Activated CD4-positive, alpha-beta memory T cell treated with anti-CD3 and anti-CD28 coated beads for 36 hours (primary cell): ENCODE measurements at regions of chr2 and their contacts with region 1.

Region 1: GRCh38 chr2:11778923-11779757 is 32.7 kb downstream of the LPIN1 start:
- DNase-seq: peak; percentile 89
- H3K4me3 Mint-ChIP-seq: peak overlapping the region; percentile 53
- H3K27ac Mint-ChIP-seq: peak overlapping the region; percentile 61
- H3K4me1 Mint-ChIP-seq: peaks cover 44% of the 10 kb centered on the region
- H3K27me3 Mint-ChIP-seq: no peaks in the 10 kb centered on the region

Region 2: DNA sequence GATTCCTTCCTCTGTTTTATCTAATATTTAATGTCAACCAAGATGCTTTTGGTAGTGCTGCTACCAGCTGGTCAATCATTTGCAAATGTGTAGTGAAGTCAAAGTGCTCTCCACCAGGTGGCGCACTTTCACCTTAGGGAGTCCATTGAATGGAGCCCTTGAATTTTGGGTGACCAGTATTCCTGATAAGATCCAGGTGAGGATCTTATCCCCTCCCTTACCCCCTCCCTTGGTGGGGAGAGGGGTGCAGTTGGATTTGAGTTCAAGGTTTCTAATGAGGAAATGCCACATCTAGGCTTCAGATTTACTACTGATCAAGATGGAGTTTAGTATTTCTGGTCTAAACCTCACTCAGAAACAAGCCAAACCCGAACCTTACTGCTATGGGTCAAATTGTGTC is 301.1 kb before region 1 on chr2:
- CTCF ChIA-PET with region 1: interaction called, 6 read pairs
- POLR2A ChIA-PET with region 1: no interaction called
- intact Hi-C with region 1: loop called (anchors 1 kb)
- DNase-seq: peak; percentile 86
- H3K4me3 Mint-ChIP-seq: no peak overlapping the region
- H3K27ac Mint-ChIP-seq: no peak overlapping the region
- H3K4me1 Mint-ChIP-seq: peaks cover under 1% of the 10 kb centered on the region
- H3K27me3 Mint-ChIP-seq: peaks cover 21% of the 10 kb centered on the region

Region 3: GRCh38 chr2:11571131-11571530 is 208.0 kb before region 1 on chr2:
- CTCF ChIA-PET with region 1: no interaction called
- POLR2A ChIA-PET with region 1: no interaction called
- intact Hi-C with region 1: no loop called
- DNase-seq: no peak
- H3K4me3 Mint-ChIP-seq: no peak overlapping the region
- H3K27ac Mint-ChIP-seq: no peak overlapping the region
- H3K4me1 Mint-ChIP-seq: no peaks in the 10 kb centered on the region
- H3K27me3 Mint-ChIP-seq: peaks cover 5% of the 10 kb centered on the region

Region 4: DNA sequence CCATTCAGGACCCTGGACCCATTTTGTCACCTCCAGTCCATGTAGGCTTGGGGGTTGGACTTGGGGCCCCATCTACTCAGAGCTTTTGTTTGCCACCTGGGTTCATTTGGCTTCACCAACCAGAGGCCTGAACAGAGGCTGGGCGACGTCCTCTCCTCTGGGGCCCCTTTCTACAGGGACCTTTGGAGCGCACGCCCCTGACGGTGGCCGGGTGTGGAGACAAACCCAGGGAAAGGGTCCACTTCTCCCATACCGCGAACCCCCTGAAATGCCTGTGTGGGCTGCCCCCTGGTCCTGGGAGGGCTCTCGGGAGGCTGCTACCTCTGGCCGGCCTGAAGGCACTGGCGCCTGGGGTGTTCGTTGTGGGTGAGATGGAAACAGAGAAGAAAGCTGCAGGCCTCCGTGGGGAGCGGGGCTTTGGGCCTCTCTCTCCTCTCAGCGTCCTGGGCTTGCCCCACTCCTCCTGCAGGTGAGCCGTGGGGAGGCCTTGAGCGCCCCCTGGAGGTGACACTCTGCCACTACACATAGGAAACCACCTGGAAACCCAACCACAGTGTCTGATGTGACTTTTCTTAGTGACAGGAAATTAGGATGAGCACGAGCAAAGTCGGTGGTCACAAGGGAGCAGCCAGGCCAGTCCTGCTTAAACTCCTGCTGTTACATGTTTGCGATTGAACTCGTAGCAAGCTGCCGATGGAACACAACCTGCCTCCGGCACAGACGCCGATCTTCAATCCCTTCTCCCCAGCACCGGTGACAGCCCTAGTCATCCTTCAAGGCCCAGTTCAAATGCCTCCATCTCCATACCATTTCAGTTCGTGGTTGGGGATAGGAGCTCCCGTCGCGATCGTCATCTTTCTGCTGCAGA is 97.2 kb before region 1 on chr2:
- CTCF ChIA-PET with region 1: interaction called, 364 read pairs
- POLR2A ChIA-PET with region 1: no interaction called
- intact Hi-C with region 1: no loop called
- DNase-seq: peak; percentile 77
- H3K4me3 Mint-ChIP-seq: no peak overlapping the region
- H3K27ac Mint-ChIP-seq: no peak overlapping the region
- H3K4me1 Mint-ChIP-seq: peaks cover 5% of the 10 kb centered on the region
- H3K27me3 Mint-ChIP-seq: peaks cover 26% of the 10 kb centered on the region

Region 5: GRCh38 chr2:11688222-11689069 is 90.7 kb before region 1 on chr2:
- CTCF ChIA-PET with region 1: interaction called, 364 read pairs
- POLR2A ChIA-PET with region 1: interaction called, 7 read pairs
- intact Hi-C with region 1: loop called (anchors 1 kb)
- DNase-seq: peak; percentile 88
- H3K4me3 Mint-ChIP-seq: peak overlapping the region; percentile 7
- H3K27ac Mint-ChIP-seq: no peak overlapping the region
- H3K4me1 Mint-ChIP-seq: peaks cover 11% of the 10 kb centered on the region
- H3K27me3 Mint-ChIP-seq: peaks cover 12% of the 10 kb centered on the region

Region 6: GRCh38 chr2:11738589-11739436 is 40.3 kb before region 1 on chr2:
- CTCF ChIA-PET with region 1: interaction called, 242 read pairs
- POLR2A ChIA-PET with region 1: interaction called, 9 read pairs
- intact Hi-C with region 1: loop called (anchors 1 kb)
- DNase-seq: peak; percentile 51
- H3K4me3 Mint-ChIP-seq: no peak overlapping the region
- H3K27ac Mint-ChIP-seq: no peak overlapping the region
- H3K4me1 Mint-ChIP-seq: peaks cover 18% of the 10 kb centered on the region
- H3K27me3 Mint-ChIP-seq: peaks cover 5% of the 10 kb centered on the region

Region 7: DNA sequence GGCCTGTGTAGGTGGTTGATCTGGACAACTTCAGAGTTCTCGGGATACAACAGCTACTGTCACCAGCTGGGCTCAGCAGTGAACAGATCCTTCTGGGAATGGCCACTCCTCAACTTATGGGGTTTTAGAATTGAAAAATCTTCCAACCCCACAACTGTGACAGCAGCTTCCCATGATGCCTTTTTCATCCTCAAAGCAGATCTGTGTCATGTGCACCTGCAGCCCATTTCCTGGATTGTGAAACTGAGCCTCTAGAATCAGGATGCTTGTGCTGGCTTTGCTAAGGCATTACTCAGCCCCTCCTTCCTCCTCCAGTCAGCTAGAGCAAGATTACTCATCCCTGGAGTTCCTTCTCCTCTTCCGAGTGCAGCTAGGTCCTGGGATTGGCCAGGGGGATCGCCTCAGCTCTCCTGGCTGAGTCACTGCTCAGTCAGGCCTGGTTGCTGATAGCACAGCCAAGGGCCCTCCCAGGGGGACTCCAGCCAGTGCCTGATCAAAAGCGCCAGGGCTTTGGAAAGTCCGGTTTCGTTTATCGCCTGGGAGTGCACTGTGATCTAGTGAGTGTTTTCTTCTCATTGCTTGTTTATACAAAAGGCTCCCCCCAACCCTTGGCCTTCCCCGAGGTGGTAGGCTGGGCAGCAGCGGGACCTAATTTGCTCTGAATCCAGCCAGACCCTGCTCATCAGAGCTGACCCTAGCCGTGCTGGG is 35.1 kb before region 1 on chr2:
- CTCF ChIA-PET with region 1: interaction called, 242 read pairs
- POLR2A ChIA-PET with region 1: interaction called, 9 read pairs
- intact Hi-C with region 1: loop called (anchors 2 kb)
- DNase-seq: peak; percentile 93
- H3K4me3 Mint-ChIP-seq: peak overlapping the region; percentile 48
- H3K27ac Mint-ChIP-seq: peak overlapping the region; percentile 77
- H3K4me1 Mint-ChIP-seq: peaks cover 54% of the 10 kb centered on the region
- H3K27me3 Mint-ChIP-seq: no peaks in the 10 kb centered on the region

Region 8: DNA sequence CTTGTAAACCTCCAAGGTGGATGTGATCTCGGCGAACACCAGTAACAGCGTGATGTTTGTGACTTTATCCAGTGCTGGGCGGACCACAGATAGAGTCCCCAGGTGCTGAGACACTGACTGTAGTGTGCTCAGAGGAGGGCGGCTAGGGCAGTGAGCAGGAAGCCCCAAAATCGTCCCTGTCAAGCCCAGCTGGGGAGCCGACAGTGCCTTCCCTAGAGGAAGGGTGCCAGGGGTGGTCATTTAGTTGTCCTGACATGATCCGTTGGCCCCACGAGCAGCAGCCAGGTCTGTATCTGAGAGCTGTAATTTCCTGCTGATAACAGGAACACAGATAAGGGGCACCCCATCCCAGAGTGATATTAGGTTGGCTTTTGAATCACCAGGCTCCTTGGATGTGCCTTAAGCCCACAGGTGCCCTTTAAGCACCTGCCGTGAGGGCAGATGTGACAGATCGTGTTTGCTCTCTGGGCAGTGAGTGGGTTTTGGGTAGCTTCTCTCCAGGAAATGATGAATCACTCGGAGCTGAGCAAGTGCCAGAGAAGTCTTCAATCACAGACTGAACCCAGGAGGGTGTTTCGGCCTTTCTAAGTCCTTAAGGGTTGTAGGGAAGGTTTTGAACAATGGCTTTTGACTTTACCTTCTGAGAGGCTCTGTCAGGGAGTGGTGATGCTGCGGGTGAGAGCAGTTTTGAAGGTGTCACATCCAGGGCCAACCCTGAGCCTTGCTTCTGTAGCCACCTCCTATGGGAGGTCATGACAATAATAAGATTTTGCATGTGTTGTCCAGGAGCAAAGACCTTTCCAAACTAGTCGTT is 25.0 kb before region 1 on chr2:
- CTCF ChIA-PET with region 1: interaction called, 78 read pairs
- POLR2A ChIA-PET with region 1: interaction called, 5 read pairs
- intact Hi-C with region 1: loop called (anchors 1 kb)
- DNase-seq: peak; percentile 87
- H3K4me3 Mint-ChIP-seq: peak overlapping the region; percentile 72
- H3K27ac Mint-ChIP-seq: peak overlapping the region; percentile 97
- H3K4me1 Mint-ChIP-seq: peaks cover 90% of the 10 kb centered on the region
- H3K27me3 Mint-ChIP-seq: no peaks in the 10 kb centered on the region